ENCODE measurements at regions of chr15 and their contacts with region 1.

Region 1: DNA sequence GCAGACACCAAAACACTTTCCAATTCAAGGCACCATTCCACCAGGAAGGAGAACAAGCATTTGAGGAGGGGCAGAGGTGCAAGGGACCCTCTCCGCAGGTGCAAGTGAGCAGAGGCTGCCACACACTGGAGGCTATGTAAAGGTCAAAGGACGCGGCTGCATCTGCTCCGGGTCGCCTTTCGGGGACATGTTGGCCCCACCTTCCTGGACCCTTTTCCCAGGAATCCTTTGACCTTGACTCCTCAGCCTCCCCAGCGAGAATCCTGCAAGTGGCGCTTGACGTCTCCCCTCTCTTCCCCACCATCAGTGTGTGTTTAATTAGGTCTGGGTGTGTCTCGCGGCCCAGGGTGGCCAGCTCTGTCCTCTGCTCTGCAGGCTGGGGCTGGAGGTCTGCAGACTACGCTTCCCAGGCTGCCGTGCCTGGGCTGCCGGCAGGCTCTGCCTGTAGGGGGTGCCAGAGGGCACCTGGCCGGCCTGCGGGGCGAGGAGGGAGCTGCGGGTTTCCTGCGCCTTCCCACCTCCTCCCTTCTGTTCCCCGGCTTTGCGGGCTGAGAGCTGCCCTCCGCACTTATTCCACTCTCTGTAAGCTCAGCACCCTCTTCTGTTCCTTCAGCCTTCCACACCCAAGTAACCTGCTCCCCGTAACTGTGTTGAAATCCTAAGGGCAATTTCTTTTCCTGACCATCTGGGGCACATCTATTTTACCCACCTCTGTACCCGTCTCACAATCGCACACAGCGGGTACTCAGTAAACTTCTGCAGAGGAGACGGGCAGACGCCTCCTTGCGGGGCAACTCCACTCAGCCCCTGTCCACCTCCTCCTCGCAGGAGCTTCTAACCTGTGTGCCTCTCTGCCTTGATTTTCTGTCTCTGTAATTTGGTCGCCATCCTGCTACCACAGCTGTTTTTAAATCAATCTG is 129.8 kb downstream of the NSMCE3 start:
- DNase-seq: no peak
- ATAC-seq: peak; percentile 58
- H3K4me3 ChIP-seq: no peak overlapping the region
- H3K27ac ChIP-seq: no peak overlapping the region
- H3K4me1 ChIP-seq: no peaks in the 10 kb centered on the region
- H3K27me3 ChIP-seq: no peaks in the 10 kb centered on the region

Region 2: DNA sequence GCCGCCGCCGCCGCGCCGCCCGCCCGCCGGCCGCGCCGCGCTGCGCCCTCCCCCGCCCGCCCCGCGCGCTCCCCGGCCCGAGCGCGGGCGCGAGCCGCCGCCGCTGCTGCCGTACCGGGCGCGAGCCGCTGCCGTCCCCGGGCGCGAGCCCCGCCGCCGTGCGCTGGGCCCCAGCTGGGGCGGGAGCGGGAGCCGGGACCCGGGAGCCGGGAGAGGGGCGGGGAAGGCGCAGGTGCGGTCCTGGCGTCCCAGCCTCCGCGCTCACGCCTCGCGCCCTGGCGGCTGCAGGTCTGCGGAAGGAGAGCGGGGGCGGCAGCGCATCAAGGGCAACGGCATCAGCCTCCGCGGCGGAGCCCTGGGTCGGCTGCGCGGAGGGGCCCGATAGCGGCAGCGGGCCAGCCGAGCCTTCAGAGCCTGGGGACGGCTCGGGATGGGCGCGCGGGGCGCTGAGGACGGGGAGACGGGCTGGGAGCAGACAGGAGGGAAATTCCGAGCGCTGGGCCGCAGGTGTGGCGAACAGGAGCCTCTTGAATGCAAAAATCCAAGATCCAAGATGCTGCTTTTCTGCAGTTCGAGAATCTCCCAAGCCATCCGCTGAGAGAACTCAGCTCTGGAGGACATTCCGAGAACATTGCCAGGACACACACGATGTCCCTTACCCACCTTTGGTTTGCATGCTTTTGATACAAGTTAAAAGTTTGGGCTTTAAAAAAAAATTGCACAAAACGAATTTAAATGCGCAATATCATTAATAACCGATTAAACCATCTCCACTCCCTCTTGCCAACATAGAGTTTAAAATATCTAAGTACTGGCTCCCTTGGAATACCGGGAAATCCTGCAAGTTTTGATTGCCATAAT is 431.4 kb after region 1 on chr15:
- intact Hi-C with region 1: loop called in 1 of 2 experiments (anchors 10 kb)
- DNase-seq: no peak
- ATAC-seq: no peak
- H3K4me3 ChIP-seq: peak overlapping the region; percentile 89
- H3K27ac ChIP-seq: no peak overlapping the region
- H3K4me1 ChIP-seq: no peaks in the 10 kb centered on the region
- H3K27me3 ChIP-seq: no peaks in the 10 kb centered on the region

Measured in aorta (tissue), 5 donors.